GM18951 (cell line): ENCODE measurements at regions of chr15 and their contacts with region 1.

Region 1: GRCh38 chr15:96345560-96346399 is 15.3 kb downstream of the NR2F2 start:
- POLR2A ChIP-seq: no peak

Region 2: GRCh38 chr15:96254168-96254567 is 91.6 kb before region 1 on chr15:
- in situ Hi-C with region 1: no loop called
- POLR2A ChIP-seq: no peak

Region 3: DNA sequence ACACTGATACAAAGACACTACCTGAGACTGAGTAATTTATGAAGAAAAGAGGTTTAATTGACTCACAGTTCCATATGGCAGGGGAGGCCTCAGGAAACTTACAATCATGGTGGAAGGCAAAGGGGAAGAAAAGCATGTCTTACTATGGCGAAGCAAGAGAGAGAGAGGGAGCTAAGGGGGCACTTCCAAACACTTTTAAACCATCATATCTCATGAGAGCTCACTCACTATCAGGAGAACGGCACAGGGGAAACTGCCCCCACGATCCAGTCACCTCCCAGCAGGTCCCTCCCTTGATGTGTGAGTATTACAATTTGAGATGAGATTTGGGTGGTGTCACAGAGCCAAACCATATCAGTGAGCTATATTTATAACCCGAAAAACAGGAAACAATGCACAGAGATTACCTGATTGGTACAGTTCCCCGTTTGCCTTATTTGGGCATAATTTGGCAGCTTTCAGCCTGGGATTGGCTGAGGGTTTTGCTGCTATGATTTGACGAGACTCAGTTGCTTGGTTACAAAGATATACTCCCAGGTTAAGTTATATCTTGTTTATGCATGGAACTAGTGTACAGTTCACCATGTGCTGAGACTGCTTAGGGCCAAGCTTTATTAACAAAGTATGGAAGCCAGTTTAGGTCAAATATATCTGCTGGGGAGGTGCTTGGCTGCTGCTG is 169.0 kb after region 1 on chr15:
- in situ Hi-C with region 1: no loop called
- POLR2A ChIP-seq: no peak

Region 4: GRCh38 chr15:97234851-97235610 is 889.3 kb after region 1 on chr15:
- in situ Hi-C with region 1: loop called (anchors 10 kb)
- POLR2A ChIP-seq: no peak